Calu3 (cell line): ENCODE measurements at regions of chr19 and their contacts with region 1.

Region 1: DNA sequence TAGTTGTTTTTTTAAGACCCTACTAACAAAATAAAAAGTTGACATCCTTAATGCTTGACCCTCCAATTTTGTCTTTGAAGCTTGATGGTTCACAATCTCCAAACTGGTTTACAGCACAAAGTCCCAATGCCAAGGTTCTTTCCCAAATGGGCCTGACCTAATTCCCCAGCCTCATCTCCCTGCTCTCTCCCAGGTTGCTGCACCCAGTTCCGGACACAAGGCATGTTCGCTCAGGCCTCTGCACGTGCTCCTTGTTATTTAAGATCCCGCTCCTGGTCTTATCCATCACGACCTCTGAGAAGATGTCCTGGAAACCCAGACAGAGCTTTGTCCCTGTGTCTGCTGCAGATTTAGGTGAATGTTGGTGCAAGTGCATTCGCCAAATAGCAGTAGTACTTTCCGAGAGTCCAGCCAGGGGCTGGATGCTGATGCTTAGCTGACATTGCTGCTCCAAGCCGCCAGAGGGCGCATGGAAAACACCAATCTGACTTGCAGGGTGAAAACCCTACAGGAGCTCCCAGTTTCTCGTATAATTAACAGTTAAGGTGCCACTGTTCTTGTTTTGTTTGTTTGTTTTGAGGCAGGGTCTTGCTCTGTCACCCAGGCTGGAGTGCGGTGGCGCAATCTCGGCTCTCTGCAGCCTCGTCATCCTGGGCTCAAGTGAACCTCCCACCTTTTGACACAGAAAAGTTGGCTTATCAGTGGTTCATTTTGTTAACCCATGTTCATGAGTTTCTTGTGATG is 18.5 kb downstream of the LYPD3 start:
- DNase-seq: peak; percentile 84
- H3K4me3 Mint-ChIP-seq: no peak overlapping the region
- H3K27ac Mint-ChIP-seq: no peak overlapping the region
- H3K4me1 Mint-ChIP-seq: peaks cover 9% of the 10 kb centered on the region
- H3K27me3 Mint-ChIP-seq: no peaks in the 10 kb centered on the region
- CTCF ChIP-seq: peak; percentile 97

Region 2: DNA sequence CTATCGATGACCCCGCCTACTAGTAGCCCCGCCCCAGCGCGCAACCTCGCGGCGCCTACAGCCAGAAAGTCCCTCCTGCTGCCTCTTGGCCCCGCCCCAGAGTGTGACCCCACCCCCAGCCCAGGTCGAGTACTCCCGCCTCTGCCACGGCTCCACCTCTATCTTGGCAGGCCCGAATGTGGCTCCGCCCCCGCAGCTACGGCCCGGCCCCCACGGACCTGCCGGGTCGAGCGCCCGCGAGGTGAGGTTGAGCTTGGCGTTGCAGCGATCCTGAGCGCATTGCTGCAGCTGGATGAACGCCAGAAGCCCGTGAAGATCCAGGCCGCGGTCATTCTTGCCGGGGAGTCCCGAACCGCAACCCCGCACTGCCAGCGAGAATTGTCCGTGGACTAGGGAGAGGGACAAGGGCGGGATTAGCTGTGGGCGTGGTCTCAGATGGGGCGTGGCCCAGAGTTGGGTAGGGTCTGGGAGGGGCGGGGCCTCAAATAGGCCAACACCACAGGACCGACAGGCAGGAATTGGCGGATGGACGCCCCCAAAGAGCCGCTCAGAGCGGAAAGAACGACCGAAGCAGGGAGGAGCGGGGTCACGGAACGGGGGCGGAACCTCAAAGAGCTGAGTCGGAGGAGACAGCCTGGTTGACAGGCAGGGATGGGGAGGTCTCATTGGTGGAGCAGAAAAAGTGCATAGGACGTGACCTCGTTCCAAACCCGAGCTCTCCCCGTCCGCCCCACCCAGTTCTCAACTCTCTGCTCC is 16.6 kb after region 1 on chr19:
- CTCF ChIA-PET with region 1: interaction called, 11 read pairs
- intact Hi-C with region 1: no loop called
- DNase-seq: peak; percentile 94
- H3K4me3 Mint-ChIP-seq: peak overlapping the region; percentile 75
- H3K27ac Mint-ChIP-seq: peak overlapping the region; percentile 37
- H3K4me1 Mint-ChIP-seq: peaks cover 46% of the 10 kb centered on the region
- H3K27me3 Mint-ChIP-seq: no peaks in the 10 kb centered on the region
- CTCF ChIP-seq: no peak

Region 3: GRCh38 chr19:43503501-43504425 is 56.8 kb after region 1 on chr19:
- CTCF ChIA-PET with region 1: interaction called, 17 read pairs
- intact Hi-C with region 1: no loop called
- DNase-seq: peak; percentile 99
- H3K4me3 Mint-ChIP-seq: peak overlapping the region; percentile 97
- H3K27ac Mint-ChIP-seq: peak overlapping the region; percentile 24
- H3K4me1 Mint-ChIP-seq: peaks cover 32% of the 10 kb centered on the region
- H3K27me3 Mint-ChIP-seq: no peaks in the 10 kb centered on the region
- CTCF ChIP-seq: no peak

Region 4: DNA sequence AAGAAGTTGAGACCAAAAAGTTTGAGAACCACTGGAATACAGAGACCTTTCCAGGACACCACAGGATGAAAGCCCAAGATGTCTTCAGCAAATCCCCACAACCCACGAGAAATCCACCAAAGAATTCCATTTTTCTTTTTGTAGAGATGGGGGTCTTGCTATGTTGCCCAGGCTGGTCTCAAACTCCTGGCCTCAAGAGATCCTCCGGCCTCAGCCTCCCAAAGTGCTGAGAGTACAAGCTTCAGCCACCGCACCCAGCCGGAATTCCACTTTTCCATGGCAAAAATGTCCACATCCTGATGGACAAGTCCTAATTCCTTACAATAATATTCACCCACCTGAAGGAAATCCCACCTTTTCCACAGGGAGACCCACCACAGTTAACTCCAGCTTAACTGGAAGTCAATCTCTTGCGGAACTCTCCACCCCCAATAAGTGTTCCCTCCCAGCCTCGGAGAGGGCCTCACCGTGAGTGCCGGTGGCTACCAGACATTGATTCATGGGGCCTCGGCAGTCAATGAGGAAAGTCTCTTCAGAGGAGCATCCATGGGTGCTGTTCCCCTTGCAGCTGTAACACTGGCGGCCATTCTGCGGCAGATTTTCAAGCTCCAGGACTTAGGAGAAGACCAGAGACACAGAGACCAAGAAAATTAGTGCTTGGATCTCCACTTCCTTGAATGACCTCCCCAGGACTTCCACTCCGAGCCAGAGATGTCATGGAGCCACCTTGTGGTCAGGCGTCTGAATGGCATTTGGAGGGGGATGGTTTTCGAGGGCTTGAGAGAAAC is 205.0 kb after region 1 on chr19:
- CTCF ChIA-PET with region 1: no interaction called
- intact Hi-C with region 1: loop called (anchors 2 kb)
- DNase-seq: peak; percentile 79
- H3K4me3 Mint-ChIP-seq: no peak overlapping the region
- H3K27ac Mint-ChIP-seq: no peak overlapping the region
- H3K4me1 Mint-ChIP-seq: no peaks in the 10 kb centered on the region
- H3K27me3 Mint-ChIP-seq: no peaks in the 10 kb centered on the region
- CTCF ChIP-seq: peak; percentile 81